PC-9 (cell line): ENCODE measurements at regions of chr1 and their contacts with region 1.

Region 1: GRCh38 chr1:116909510-116910378 is at the start of gene PTGFRN:
- DNase-seq: peak; percentile 53 to 68
- H3K4me3 ChIP-seq: peak within 1 kb of the TSS; percentile 77
- H3K27ac ChIP-seq: peak within 1 kb of the TSS; percentile 21
- H3K4me1 ChIP-seq: peaks cover 56% of the 10 kb centered on the region
- H3K27me3 ChIP-seq: no peaks in the 10 kb centered on the region
- CTCF ChIP-seq: no peak
- total RNA-seq, gene PTGFRN: 83.7 and 87.3 TPM in 2 replicates

Region 2: DNA sequence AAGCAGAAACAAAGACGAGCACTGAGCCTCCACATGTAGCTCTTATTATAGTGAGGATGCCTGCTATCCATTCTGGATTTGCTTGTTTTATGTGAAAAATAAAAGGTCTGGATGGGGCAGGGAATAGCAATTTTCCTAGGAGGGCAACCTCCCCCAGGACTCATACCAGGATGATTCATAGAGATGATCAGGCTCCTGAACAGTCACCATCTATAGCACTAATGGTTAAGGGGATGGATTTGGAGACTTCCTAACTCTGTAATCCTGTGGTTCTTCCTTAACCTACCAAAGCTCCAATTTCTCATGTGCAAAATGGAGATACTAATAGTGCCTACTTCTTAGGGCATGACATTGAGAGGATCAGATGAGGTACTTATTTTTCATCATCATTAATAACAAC is 304.4 kb before region 1 on chr1:
- CTCF ChIA-PET with region 1: no interaction called
- POLR2A ChIA-PET with region 1: no interaction called
- intact Hi-C with region 1: no loop called
- DNase-seq: no peak
- H3K4me3 ChIP-seq: no peak overlapping the region
- H3K27ac ChIP-seq: no peak overlapping the region
- H3K4me1 ChIP-seq: 0 out of 2 replicates have a peak, but pooled peaks cover 5% of the 10 kb centered on the region
- H3K27me3 ChIP-seq: no peaks in the 10 kb centered on the region
- CTCF ChIP-seq: no peak

Region 3: DNA sequence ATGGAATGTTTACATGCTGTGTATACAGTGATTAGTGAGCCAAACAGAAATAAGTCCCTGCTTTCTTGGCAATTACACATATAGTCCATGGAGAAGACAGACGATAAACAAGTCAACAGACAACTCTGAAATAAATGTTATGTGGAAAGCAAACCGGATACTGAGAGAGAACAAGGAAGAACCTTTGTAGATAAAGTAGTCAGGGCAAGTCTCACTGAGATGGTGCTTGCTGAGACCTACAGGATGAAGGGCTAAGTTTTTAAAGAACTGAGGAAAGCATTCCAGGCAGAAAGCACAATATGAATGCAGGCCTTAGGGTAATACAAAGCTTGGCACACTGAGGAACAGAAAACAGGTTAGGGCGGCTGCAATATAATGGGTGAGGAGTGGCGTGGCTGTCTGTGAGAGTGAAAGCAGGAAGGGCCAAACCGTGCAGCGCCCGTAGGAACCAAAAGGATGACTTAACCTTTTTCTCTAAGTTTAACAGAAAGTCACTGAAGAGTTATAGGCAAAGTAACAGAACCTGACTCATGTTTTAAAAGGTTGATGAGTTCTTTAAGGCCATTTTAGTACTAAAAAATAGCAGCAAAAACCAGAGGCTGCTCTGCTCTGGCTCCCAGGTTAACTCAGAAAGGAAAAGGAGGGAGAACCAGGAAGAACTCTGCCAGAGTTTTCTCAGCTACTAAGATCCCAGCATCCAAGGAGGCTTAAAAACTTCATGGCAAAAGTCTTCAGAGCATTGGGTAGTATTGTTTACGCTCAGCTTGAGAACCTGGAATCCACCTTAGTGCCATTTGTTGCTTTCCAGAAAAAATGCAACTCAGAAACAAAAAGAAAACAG is 141.7 kb after region 1 on chr1:
- CTCF ChIA-PET with region 1: no interaction called
- POLR2A ChIA-PET with region 1: no interaction called
- intact Hi-C with region 1: loop called (anchors 1 kb)
- DNase-seq: peak in 1 of 2 experiments; percentile 27
- H3K4me3 ChIP-seq: no peak overlapping the region
- H3K27ac ChIP-seq: peak overlapping the region; percentile 13; the same call in 1 of the 2 replicates
- H3K4me1 ChIP-seq: no peaks in the 10 kb centered on the region
- H3K27me3 ChIP-seq: no peaks in the 10 kb centered on the region
- CTCF ChIP-seq: no peak

Region 4: GRCh38 chr1:117250061-117250606 is 340.4 kb after region 1 on chr1:
- CTCF ChIA-PET with region 1: no interaction called
- POLR2A ChIA-PET with region 1: no interaction called
- intact Hi-C with region 1: no loop called
- DNase-seq: no peak
- H3K4me3 ChIP-seq: no peak overlapping the region
- H3K27ac ChIP-seq: no peak overlapping the region
- H3K4me1 ChIP-seq: no peaks in the 10 kb centered on the region
- H3K27me3 ChIP-seq: no peaks in the 10 kb centered on the region
- CTCF ChIP-seq: no peak